Astrocyte of the cerebellum (primary cell): ENCODE measurements at regions of chr2 and their contacts with region 1.

Region 1: DNA sequence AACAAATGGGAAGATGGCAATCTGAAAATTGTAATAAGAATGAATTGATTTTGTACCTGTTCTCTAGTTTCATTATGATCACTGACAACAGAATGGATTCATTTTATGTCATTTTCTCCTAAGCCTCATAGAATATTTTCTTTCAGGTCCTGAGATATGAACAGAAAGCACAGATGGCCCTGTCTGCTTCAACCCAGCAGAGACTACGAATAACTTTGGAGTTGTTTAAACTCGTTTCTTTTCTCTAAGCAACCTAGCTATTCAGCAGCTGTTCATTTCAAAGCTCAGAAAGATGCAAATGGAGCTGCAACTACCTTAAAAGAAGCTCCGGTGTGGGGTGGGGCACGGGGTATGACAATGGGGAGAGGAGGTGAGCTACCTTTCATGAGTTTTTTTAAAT is 124.9 kb downstream of the ALK start:
- DNase-seq: no peak
- H3K4me3 ChIP-seq: no peak overlapping the region
- CTCF ChIP-seq: no peak

Region 2: GRCh38 chr2:29963972-29964570 is 167.6 kb after region 1 on chr2:
- in situ Hi-C with region 1: loop called (anchors 5 kb)
- DNase-seq: no peak
- H3K4me3 ChIP-seq: no peak overlapping the region
- CTCF ChIP-seq: no peak